Activated CD8-positive, alpha-beta T cell treated with anti-CD3 and anti-CD28 coated beads for 36 hours (primary cell): ENCODE measurements at regions of chr12 and their contacts with region 1.

Region 1: DNA sequence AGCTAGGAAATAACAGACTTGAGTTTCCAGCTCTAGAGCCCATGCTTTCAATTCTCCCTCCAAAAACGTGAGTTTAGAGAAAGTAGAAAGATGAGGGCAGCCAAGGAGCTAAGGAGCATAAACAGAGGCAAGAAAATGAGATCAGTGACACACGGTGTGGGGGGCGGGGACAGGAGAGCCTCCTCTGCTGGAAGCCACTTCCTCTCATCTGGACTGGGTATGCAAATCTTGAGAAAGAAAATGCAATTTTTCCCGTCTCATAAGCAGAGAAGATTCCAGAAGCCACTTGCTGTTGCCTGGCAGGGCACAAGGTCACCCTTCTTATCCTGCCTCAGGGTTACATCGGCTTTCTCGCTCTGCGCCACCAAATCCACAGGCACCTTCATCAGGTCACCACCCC is 6.0 kb downstream of the OR10P1 start:
- DNase-seq: peak; percentile 68
- ATAC-seq: peak; percentile 35
- H3K4me3 Mint-ChIP-seq: no peak overlapping the region
- H3K27ac Mint-ChIP-seq: no peak overlapping the region
- H3K4me1 Mint-ChIP-seq: peaks cover 26% of the 10 kb centered on the region
- H3K27me3 Mint-ChIP-seq: peaks cover 2% of the 10 kb centered on the region
- CTCF ChIP-seq: no peak

Region 2: GRCh38 chr12:55548756-55549155 is 93.9 kb before region 1 on chr12:
- CTCF ChIA-PET with region 1: no interaction called
- POLR2A ChIA-PET with region 1: no interaction called
- intact Hi-C with region 1: no loop called
- DNase-seq: no peak
- ATAC-seq: no peak
- H3K4me3 Mint-ChIP-seq: no peak overlapping the region
- H3K27ac Mint-ChIP-seq: no peak overlapping the region
- H3K4me1 Mint-ChIP-seq: no peaks in the 10 kb centered on the region
- H3K27me3 Mint-ChIP-seq: peaks cover 23% of the 10 kb centered on the region
- CTCF ChIP-seq: no peak

Region 3: GRCh38 chr12:55629058-55629841 is 13.4 kb before region 1 on chr12:
- CTCF ChIA-PET with region 1: interaction called, 38 read pairs
- POLR2A ChIA-PET with region 1: interaction called, 5 read pairs
- intact Hi-C with region 1: no loop called
- DNase-seq: peak; percentile 48
- ATAC-seq: peak; percentile 78
- H3K4me3 Mint-ChIP-seq: no peak overlapping the region
- H3K27ac Mint-ChIP-seq: peak overlapping the region; percentile 36
- H3K4me1 Mint-ChIP-seq: peaks cover 24% of the 10 kb centered on the region
- H3K27me3 Mint-ChIP-seq: peaks cover 24% of the 10 kb centered on the region
- CTCF ChIP-seq: no peak

Region 4: DNA sequence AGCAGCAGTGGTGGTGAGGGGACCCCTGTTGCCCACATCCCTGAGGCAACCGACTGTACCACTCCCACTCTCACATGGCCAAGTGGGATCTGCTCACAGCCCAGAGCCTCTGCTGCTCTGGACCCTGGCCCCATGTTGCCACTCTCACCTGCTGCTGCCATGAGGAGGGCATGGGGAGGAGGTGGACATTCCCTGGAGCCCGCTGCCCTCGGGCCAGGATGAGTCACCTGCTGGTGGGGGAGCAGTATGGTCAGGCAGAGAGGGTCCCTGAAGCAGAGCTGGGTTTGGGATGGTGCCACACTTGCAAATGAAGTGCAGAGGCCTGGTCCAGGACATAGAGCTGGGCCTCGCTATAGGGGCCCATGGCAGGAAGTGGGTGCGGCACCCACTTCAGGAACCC is 1265.5 kb after region 1 on chr12:
- CTCF ChIA-PET with region 1: no interaction called
- POLR2A ChIA-PET with region 1: no interaction called
- intact Hi-C with region 1: no loop called
- DNase-seq: no peak
- ATAC-seq: no peak
- H3K4me3 Mint-ChIP-seq: no peak overlapping the region
- H3K27ac Mint-ChIP-seq: no peak overlapping the region
- H3K4me1 Mint-ChIP-seq: no peaks in the 10 kb centered on the region
- H3K27me3 Mint-ChIP-seq: peaks cover 3% of the 10 kb centered on the region
- CTCF ChIP-seq: no peak